ENCODE measurements at regions of chr2 and their contacts with region 1.

Region 1: GRCh38 chr2:84865181-84865783 is 15.6 kb downstream of the TRABD2A start:
- DNase-seq: no peak
- ATAC-seq: no peak
- H3K4me3 Mint-ChIP-seq: no peak overlapping the region
- H3K27ac Mint-ChIP-seq: no peak overlapping the region
- H3K4me1 Mint-ChIP-seq: peaks cover 2% of the 10 kb centered on the region
- H3K27me3 Mint-ChIP-seq: peaks cover 4% of the 10 kb centered on the region
- CTCF ChIP-seq: no peak

Region 2: DNA sequence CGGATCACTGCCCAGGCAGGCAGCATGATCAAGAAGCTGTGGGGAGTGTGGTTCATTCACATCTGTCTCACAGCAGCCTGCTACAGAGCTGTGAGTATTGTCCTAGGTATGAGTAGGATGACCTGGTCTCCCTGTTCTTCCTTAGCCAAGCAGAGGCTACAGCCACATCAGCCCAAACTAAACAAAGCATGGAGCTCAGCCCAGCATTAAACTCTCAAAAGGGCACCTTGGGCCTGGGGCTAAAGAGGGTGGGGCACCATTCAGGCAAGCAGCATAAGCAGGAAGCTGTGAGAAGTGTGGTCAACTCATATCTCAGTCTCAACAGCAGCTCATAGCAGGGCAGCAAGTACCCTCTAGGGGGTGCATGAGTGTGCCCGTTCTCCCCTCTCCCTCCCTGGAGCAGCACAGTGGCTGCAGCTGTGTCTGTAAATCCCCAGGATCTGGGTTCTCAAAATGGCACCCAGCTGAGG is 124.0 kb before region 1 on chr2:
- CTCF ChIA-PET with region 1: interaction called, 12 read pairs
- POLR2A ChIA-PET with region 1: no interaction called
- intact Hi-C with region 1: loop called (anchors 1 kb)
- DNase-seq: no peak
- ATAC-seq: peak; percentile 90
- H3K4me3 Mint-ChIP-seq: no peak overlapping the region
- H3K27ac Mint-ChIP-seq: no peak overlapping the region
- H3K4me1 Mint-ChIP-seq: peaks cover 5% of the 10 kb centered on the region
- H3K27me3 Mint-ChIP-seq: peaks cover 13% of the 10 kb centered on the region
- CTCF ChIP-seq: no peak

Measured in activated B cell treated with CpG ODN at 0.5 μM for 24 hours (primary cell).